ENCODE measurements at regions of chr13 and their contacts with region 1.

Region 1: DNA sequence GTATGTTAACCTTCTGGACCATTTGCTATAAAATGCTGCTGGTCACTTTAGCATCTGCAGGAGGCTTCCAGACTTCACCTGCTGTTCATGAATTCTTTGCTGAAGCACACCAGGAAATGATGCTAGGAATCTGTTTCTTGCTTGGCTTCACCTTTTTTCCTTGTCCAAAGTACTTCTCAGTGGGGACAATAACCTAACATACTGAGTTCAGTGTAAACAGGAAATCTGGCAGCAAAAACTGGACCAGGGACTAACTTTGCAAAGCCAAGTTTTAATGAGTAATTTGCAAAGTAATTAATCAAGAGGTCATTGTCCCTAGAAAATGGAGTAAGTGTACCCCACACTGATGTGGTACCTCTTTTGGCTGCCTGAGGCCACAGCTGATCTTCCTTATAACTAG is 128.4 kb downstream of the RXFP2 start:
- H3K4me3 Mint-ChIP-seq: no peak overlapping the region
- H3K27ac Mint-ChIP-seq: no peak overlapping the region
- H3K4me1 Mint-ChIP-seq: peaks cover 36% of the 10 kb centered on the region
- H3K27me3 Mint-ChIP-seq: no peaks in the 10 kb centered on the region

Region 2: DNA sequence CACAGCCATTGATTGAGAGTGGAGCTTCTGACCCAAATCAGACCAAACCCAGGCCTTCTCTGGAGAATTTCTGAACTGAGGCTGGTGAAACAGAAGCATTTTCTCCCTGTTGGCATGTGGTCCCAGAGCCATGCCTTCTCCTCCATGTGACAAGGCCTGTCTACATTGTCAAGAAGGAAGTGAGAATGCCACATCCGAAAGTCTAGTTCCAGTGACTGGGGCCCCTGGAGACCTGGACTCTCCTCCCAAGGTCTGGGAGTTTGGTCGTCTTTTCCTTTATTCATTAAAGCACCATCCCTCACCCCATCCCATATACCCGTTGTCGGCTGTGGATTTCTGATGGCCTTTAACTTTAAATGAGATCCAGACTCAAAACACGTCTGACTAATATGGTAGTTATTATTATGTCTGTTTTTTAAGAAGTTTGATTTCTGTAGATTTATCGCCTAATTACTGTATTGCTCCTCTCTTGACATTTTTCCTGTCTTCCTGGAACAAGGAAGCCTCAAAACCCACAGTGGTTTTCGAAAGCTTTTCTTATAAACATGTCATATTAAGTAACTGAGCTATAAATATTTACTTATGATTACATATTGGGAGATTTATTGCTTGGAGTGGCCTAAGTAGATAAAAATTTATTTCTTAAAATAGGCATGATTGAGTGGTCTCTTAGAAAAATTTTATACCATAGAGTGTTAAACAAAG is 35.6 kb after region 1 on chr13:
- intact Hi-C with region 1: loop called (anchors 5 kb)
- H3K4me3 Mint-ChIP-seq: no peak overlapping the region
- H3K27ac Mint-ChIP-seq: peak overlapping the region; percentile 74
- H3K4me1 Mint-ChIP-seq: peaks cover 56% of the 10 kb centered on the region
- H3K27me3 Mint-ChIP-seq: no peaks in the 10 kb centered on the region

Measured in dendritic cell treated with granulocyte-macrophage colony-stimulating factor and Interleukin-4, amounts not matched to agents 40 ng/mL and 50 ng/mL, for 4 days (primary cell).